ENCODE measurements at regions of chr20 and their contacts with region 1.

Region 1: GRCh38 chr20:645318-646106 is 7.5 kb downstream of the SRXN1 start:
- DNase-seq: peak; percentile 78 to 89
- H3K4me3 ChIP-seq: no peak overlapping the region
- H3K4me3 Mint-ChIP-seq: no peak overlapping the region
- H3K27ac Mint-ChIP-seq: no peak overlapping the region
- H3K4me1 ChIP-seq: no peaks in the 10 kb centered on the region
- H3K4me1 Mint-ChIP-seq: no peaks in the 10 kb centered on the region
- H3K27me3 ChIP-seq: no peaks in the 10 kb centered on the region
- H3K27me3 Mint-ChIP-seq: no peaks in the 10 kb centered on the region
- CTCF ChIP-seq: peak; percentile 95 to 97

Region 2: GRCh38 chr20:543369-544152 is 102.0 kb before region 1 on chr20 and contains the start of gene CSNK2A1:
- CTCF ChIA-PET with region 1: interaction called, 10 read pairs
- POLR2A ChIA-PET with region 1: no interaction called
- intact Hi-C with region 1: no loop called
- DNase-seq: peak; percentile 96 to 97
- H3K4me3 ChIP-seq: peak within 1 kb of the TSS; percentile 96
- H3K4me3 Mint-ChIP-seq: peak within 1 kb of the TSS; percentile 78
- H3K27ac Mint-ChIP-seq: peak within 1 kb of the TSS; percentile 16
- H3K4me1 ChIP-seq: peaks cover 7% of the 10 kb centered on the region
- H3K4me1 Mint-ChIP-seq: peaks cover 23% of the 10 kb centered on the region
- H3K27me3 ChIP-seq: no peaks in the 10 kb centered on the region
- H3K27me3 Mint-ChIP-seq: peaks cover 7% of the 10 kb centered on the region
- CTCF ChIP-seq: no peak
- total RNA-seq, gene CSNK2A1: 188 and 205 TPM in 2 replicates

Region 3: GRCh38 chr20:571754-572441 is 73.6 kb before region 1 on chr20:
- CTCF ChIA-PET with region 1: interaction called, 15 read pairs
- POLR2A ChIA-PET with region 1: no interaction called
- intact Hi-C with region 1: no loop called
- DNase-seq: peak; percentile 21 to 72
- H3K4me3 ChIP-seq: no peak overlapping the region
- H3K4me3 Mint-ChIP-seq: peak overlapping the region; percentile 65
- H3K27ac Mint-ChIP-seq: no peak overlapping the region
- H3K4me1 ChIP-seq: peaks cover 24% of the 10 kb centered on the region
- H3K4me1 Mint-ChIP-seq: peaks cover 13% of the 10 kb centered on the region
- H3K27me3 ChIP-seq: no peaks in the 10 kb centered on the region
- H3K27me3 Mint-ChIP-seq: peaks cover 3% of the 10 kb centered on the region
- CTCF ChIP-seq: no peak

Region 4: DNA sequence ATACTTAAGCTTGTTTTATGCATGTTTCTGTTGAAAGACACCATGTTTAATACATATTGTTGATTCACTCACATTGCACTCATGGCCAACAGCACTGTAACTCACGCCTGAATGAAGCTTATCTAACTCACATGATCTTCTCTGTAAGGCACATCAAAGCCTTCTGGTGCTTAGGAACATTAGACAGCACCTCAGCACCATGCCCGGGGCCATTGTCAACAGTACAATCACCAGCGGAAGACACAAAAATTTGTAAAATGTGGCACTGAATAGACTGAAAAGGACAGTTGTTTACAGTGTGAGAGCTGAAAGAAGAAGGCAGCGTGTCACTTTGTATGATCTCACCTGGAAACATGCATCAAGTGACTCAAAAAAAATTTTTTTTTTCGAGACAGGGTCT is 26.5 kb before region 1 on chr20:
- CTCF ChIA-PET with region 1: interaction called, 15 read pairs
- POLR2A ChIA-PET with region 1: no interaction called
- intact Hi-C with region 1: no loop called
- DNase-seq: peak; percentile 85 to 87
- H3K4me3 ChIP-seq: no peak overlapping the region
- H3K4me3 Mint-ChIP-seq: peak overlapping the region; percentile 8
- H3K27ac Mint-ChIP-seq: peak overlapping the region; percentile 48
- H3K4me1 ChIP-seq: peaks cover 13% of the 10 kb centered on the region
- H3K4me1 Mint-ChIP-seq: peaks cover 32% of the 10 kb centered on the region
- H3K27me3 ChIP-seq: no peaks in the 10 kb centered on the region
- H3K27me3 Mint-ChIP-seq: no peaks in the 10 kb centered on the region
- CTCF ChIP-seq: no peak

Region 5: GRCh38 chr20:728248-728944 is 82.9 kb after region 1 on chr20:
- CTCF ChIA-PET with region 1: interaction called, 6 read pairs
- POLR2A ChIA-PET with region 1: no interaction called
- intact Hi-C with region 1: loop called (anchors 1 kb)
- DNase-seq: peak; percentile 71 to 86
- H3K4me3 ChIP-seq: peak overlapping the region; percentile 55
- H3K4me3 Mint-ChIP-seq: peak overlapping the region; percentile 70
- H3K27ac Mint-ChIP-seq: no peak overlapping the region
- H3K4me1 ChIP-seq: no peaks in the 10 kb centered on the region; the same call in 1 of the 2 replicates
- H3K4me1 Mint-ChIP-seq: no peaks in the 10 kb centered on the region
- H3K27me3 ChIP-seq: no peaks in the 10 kb centered on the region; the same call in 1 of the 2 replicates
- H3K27me3 Mint-ChIP-seq: peaks cover 33% of the 10 kb centered on the region
- CTCF ChIP-seq: peak; percentile 74 to 90

Measured in Caco-2 (cell line).